Heart left ventricle (tissue), 16 donors: ENCODE measurements at regions of chr4 and their contacts with region 1.

Region 1: GRCh38 chr4:94304365-94304971 is 38.2 kb downstream of the HPGDS start:
- DNase-seq: no peak
- ATAC-seq: peak in 1 of 4 donors; percentile 70
- H3K4me3 ChIP-seq: no peak overlapping the region
- H3K27ac ChIP-seq: no peak overlapping the region
- H3K4me1 ChIP-seq: peaks cover 0 to 17% (median 5%) of the 10 kb centered on the region in 12 donors
- H3K27me3 ChIP-seq: no peaks in the 10 kb centered on the region
- CTCF ChIP-seq: peak; percentile 39 to 71 (median 54)
- POLR2A ChIP-seq: no peak

Region 2: GRCh38 chr4:94207469-94208224 is 96.8 kb before region 1 on chr4 and contains the start of gene SMARCAD1:
- intact Hi-C with region 1: no loop called
- DNase-seq: peak; percentile 90 to 95 (median 91)
- ATAC-seq: peak; percentile 93 to 97 (median 96)
- H3K4me3 ChIP-seq: peak within 1 kb of the TSS; percentile 27 to 88 (median 80)
- H3K27ac ChIP-seq: peak within 1 kb of the TSS; percentile 83 to 96 (median 89)
- H3K4me1 ChIP-seq: peaks cover 5 to 32% (median 19%) of the 10 kb centered on the region in 12 donors
- H3K27me3 ChIP-seq: no peaks in the 10 kb centered on the region
- CTCF ChIP-seq: no peak
- POLR2A ChIP-seq: no peak
- total RNA-seq, gene SMARCAD1: 7.3 to 14.0 (median 9.8) TPM

Region 3: DNA sequence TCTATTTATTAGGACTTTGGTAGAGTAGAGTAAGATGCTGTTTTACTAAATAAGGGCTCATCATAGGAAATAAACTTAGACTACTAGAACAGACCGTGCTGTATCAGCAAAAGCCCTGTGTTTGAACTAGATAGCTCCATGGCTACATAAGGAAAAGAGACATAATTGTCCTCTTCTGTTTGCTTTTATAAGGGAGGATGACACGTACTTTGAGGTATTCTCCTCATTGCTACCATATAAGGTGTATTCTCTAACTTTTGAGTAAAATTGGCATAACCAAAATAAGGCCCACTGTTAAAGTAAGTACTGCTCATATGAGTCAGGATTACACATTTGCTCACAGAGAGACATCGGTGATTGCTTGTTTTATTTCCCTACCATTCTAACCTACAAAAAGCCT is 211.6 kb after region 1 on chr4:
- intact Hi-C with region 1: no loop called
- DNase-seq: no peak
- ATAC-seq: peak; percentile 10 to 49 (median 20)
- H3K4me3 ChIP-seq: no peak overlapping the region
- H3K27ac ChIP-seq: peak overlapping the region in 9 of 12 donors; percentile 2 to 66 (median 44)
- H3K4me1 ChIP-seq: peaks cover 0 to 77% (median 47%) of the 10 kb centered on the region in 12 donors
- H3K27me3 ChIP-seq: no peaks in the 10 kb centered on the region
- CTCF ChIP-seq: no peak
- POLR2A ChIP-seq: no peak

Region 4: DNA sequence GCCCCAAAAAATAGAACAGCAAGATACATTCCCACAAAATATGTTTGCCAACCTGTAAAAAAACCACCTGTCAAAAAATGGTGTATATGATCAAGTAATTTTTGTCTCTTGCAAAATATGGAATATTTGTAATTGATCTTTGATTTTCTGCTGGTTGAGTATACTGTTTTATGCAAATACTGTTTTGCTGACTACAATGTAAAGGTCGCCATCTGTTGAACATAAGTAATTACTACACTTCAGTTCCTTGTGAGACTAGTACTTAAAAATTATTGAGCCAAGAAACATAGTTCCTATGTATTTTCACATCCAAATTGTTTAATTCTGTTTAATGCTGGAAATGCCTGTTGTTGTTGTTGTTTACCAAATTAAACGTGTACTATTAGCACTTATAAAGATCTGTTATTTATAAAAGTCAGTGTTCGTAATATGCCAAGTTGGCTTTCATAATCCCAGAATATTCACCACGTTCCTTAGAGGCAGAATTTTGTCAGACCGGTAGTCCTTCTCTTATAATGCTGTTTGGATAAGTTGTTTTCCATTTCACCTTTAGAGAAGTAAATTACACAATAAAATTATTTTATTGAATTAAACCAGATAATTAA is 291.5 kb after region 1 on chr4:
- intact Hi-C with region 1: loop called in 3 of 10 experiments (anchors 5 to 10 kb)
- DNase-seq: no peak
- ATAC-seq: no peak
- H3K4me3 ChIP-seq: no peak overlapping the region
- H3K27ac ChIP-seq: peak overlapping the region in 2 of 12 donors; percentile 23 to 37
- H3K4me1 ChIP-seq: peaks cover 0 to 18% (median 10%) of the 10 kb centered on the region in 12 donors
- H3K27me3 ChIP-seq: no peaks in the 10 kb centered on the region
- CTCF ChIP-seq: peak; percentile 44 to 78 (median 60)
- POLR2A ChIP-seq: no peak